ENCODE measurements at regions of chr3 and their contacts with region 1.

Region 1: DNA sequence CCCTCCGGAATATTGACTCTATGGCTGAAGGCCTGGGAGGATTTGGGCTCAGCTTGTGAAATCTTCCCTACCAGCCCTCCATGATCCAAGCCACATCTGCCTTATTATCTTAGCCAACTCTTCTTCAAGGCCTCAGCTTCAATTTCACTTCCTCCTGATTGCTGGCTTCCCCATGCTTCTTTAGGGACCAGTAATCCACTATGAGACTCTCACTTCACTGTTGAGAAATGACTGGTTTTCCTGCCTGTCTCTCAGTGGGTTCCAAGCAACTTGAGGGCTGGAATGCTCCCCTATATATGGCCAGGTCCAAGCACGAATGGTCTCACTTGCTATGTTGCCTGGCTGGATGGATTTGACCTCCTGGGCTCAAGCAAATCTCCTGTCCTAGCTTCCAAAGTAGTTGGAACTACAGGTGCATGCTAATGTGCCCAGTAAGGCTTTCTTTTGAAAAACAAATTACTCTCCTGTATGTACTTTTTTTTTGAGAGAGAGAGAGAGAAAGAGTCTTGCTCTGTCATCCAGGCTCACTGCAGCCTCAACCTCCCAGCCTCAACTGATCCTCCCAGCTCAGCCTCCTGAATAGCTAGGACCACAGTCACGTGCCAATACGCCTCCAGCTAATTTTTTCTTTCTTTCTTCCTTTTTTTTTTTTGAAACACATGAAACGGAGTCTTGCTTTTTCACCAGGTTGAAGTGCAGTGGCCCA is 7.9 kb upstream of the PIK3CB start:
- DNase-seq: no peak

Region 2: GRCh38 chr3:138767498-138768104 is 75.0 kb before region 1 on chr3:
- intact Hi-C with region 1: no loop called
- DNase-seq: no peak

Region 3: DNA sequence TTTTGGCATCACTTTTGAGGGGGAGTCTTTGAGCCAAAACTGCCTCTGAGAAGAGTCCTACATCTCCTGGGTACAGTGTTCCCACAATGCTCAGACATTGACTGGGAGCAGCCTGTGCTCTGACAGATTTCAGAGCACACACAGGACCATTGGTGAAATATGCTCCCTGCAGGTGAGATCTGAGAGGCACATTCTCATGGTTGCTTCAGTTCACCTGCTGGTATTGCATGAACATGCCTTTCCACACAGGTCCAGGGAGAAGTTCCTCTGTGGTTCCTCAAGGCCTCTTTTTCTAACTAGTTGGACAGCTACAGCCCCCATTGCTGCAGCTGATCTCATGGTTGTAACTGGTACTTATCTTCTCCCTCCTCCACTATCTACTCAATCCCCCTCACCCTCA is 67.3 kb after region 1 on chr3:
- intact Hi-C with region 1: loop called in 1 of 2 experiments (anchors 10 kb)
- DNase-seq: no peak